AG04449 (cell line): ENCODE measurements at regions of chr11 and their contacts with region 1.

Region 1: DNA sequence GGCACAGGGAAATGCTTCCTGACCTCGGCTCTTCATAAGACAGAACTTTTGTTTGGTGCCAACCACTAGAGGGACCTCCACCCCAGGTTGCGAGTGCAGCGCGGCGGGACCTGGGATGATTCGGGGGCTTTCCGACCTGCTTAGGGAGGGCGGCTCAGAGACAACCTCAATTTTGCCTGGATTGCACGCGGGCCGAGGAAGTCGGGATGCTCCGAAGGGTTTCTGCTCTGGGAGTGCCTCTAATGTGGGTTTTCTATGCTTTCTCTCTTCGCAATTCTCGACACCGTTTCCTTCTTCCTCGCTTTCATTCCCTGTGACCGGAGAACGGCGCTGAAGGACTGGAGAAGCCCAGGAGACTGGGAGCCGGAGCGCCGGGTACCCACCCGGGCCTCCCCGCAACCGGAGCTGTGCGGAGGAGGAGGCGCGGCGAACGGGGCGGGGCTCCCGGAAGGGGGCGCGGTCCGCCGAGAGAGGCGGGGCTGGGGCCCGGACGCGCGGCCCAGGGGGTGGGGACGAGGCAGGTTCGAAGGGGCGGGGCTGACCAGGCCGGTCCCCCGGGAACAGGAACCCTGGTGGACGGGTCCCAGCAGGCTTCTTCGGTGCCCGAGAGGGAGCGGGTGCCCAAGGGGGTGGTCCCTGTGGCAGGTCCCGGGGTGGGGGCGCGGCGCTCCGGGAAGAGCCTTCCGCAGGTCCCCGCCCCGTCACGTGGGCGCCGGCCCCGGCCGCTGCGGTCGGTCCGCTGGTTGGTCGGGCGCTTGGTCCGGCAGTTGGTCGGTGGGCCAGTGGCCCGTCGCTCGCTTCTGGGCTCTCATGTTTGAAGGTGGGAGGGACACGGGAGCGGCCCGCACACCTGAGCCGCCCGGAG is at the start of gene PPFIBP2:
- DNase-seq: no peak
- H3K4me3 ChIP-seq: peak within 1 kb of the TSS; percentile 72
- CTCF ChIP-seq: peak; percentile 72

Region 2: GRCh38 chr11:7485186-7486097 is 28.0 kb before region 1 on chr11 and contains the start of gene OLFML1:
- CTCF ChIA-PET with region 1: interaction called, 12 read pairs
- POLR2A ChIA-PET with region 1: no interaction called
- DNase-seq: no peak
- H3K4me3 ChIP-seq: peak within 1 kb of the TSS; percentile 40
- CTCF ChIP-seq: no peak

Region 3: GRCh38 chr11:7657306-7658025 is 144.0 kb after region 1 on chr11:
- CTCF ChIA-PET with region 1: interaction called, 40 read pairs
- POLR2A ChIA-PET with region 1: no interaction called
- DNase-seq: no peak
- H3K4me3 ChIP-seq: no peak overlapping the region
- CTCF ChIP-seq: peak; percentile 59

Region 4: DNA sequence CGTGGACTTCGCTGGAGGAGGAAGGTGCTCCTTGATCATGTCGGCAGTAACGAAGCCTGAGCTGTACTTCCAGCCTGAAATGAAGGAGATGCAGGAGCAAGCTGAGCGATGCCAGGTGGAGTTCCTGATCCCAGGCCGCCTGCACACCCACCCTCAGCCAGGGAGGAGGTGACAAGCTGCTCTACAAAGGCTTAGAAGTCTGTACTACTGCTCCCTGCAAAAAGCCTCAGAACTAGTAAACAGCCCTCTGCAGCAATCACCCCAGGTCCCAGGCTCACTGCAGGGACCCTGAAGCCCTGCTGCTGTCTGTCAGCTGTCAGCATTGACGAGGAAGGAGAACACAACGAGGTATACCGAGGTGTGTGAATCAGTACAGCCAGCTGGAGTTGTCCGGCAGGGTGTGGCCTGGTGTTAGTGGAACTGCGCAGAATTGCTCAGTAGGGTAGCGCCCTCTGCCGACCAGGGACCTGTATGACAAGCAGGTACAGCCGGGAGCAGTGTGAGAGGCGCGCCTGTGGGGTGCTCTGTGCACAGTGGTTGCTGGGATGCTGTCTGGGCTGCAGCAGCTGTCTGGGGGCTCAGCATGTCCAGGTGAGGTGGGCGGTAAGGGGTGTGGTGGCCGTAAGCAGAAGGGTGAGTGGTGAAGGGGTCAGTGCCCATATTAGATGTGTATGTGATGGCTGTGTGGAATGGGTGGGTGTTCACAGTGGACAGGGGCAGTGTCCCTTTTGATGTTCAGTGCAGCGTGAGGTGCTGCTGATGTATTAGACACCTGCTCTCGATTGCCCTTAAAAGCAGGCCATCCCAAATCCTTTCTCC is 152.2 kb after region 1 on chr11:
- CTCF ChIA-PET with region 1: interaction called, 13 read pairs
- POLR2A ChIA-PET with region 1: no interaction called
- DNase-seq: no peak
- H3K4me3 ChIP-seq: no peak overlapping the region
- CTCF ChIP-seq: peak; percentile 86

Region 5: GRCh38 chr11:7688238-7688826 is 174.9 kb after region 1 on chr11:
- CTCF ChIA-PET with region 1: interaction called, 42 read pairs
- POLR2A ChIA-PET with region 1: no interaction called
- DNase-seq: no peak
- H3K4me3 ChIP-seq: no peak overlapping the region
- CTCF ChIP-seq: peak; percentile 69

Region 6: GRCh38 chr11:7696424-7696823 is 183.0 kb after region 1 on chr11:
- CTCF ChIA-PET with region 1: interaction called, 42 read pairs
- POLR2A ChIA-PET with region 1: no interaction called
- DNase-seq: no peak
- H3K4me3 ChIP-seq: no peak overlapping the region
- CTCF ChIP-seq: no peak